Heart right ventricle (tissue), 16 donors: ENCODE measurements at regions of chr11 and their contacts with region 1.

Region 1: DNA sequence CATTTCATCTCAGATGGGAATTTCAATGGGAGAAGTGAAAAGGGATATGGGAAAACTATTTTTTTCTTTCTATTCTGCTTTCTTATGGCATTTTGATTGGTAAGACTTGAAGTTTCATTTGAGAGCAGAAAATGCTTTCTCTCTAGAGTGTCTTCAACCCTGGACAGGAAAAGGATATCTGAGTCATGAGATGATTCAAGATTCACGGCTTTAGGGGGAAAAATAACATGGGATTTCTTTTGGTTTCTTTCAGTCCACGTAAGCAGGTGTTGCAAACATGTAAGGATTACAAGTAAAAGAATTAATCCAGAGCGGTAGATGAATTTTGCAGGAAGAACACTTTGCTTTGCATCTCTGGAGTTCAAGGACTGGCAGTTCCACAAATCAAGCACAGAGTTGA is 1001.0 kb upstream of the TENM4 start:
- DNase-seq: no peak
- ATAC-seq: no peak
- H3K4me3 ChIP-seq: no peak overlapping the region
- H3K27ac ChIP-seq: no peak overlapping the region
- H3K4me1 ChIP-seq: no peaks in the 10 kb centered on the region
- H3K27me3 ChIP-seq: no peaks in the 10 kb centered on the region
- CTCF ChIP-seq: no peak

Region 2: DNA sequence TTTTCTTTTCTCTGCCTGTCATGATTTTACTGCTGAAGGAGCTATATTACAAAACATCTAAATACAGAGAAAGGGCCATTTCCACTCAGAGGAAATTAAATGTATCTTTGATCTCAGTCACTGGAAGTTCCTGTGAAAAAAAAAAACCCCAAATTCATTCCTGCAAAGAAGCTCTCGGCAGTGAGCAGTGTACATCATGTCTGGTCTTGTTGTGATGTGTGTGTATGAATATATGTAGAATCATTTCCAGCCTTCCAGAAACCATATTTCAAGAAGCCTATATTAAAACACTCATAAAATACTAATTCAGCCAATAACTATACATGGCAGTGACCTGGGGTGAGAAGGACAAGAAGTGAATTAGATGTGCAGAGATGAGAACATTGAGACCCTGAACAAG is 607.8 kb before region 1 on chr11:
- intact Hi-C with region 1: no loop called
- DNase-seq: no peak
- ATAC-seq: no peak
- H3K4me3 ChIP-seq: no peak overlapping the region
- H3K27ac ChIP-seq: no peak overlapping the region
- H3K4me1 ChIP-seq: no peaks in the 10 kb centered on the region
- H3K27me3 ChIP-seq: no peaks in the 10 kb centered on the region
- CTCF ChIP-seq: no peak

Region 3: GRCh38 chr11:80320765-80321164 is 121.1 kb before region 1 on chr11:
- intact Hi-C with region 1: no loop called
- DNase-seq: no peak
- ATAC-seq: no peak
- H3K4me3 ChIP-seq: no peak overlapping the region
- H3K27ac ChIP-seq: no peak overlapping the region
- H3K4me1 ChIP-seq: no peaks in the 10 kb centered on the region
- H3K27me3 ChIP-seq: no peaks in the 10 kb centered on the region
- CTCF ChIP-seq: no peak

Region 4: DNA sequence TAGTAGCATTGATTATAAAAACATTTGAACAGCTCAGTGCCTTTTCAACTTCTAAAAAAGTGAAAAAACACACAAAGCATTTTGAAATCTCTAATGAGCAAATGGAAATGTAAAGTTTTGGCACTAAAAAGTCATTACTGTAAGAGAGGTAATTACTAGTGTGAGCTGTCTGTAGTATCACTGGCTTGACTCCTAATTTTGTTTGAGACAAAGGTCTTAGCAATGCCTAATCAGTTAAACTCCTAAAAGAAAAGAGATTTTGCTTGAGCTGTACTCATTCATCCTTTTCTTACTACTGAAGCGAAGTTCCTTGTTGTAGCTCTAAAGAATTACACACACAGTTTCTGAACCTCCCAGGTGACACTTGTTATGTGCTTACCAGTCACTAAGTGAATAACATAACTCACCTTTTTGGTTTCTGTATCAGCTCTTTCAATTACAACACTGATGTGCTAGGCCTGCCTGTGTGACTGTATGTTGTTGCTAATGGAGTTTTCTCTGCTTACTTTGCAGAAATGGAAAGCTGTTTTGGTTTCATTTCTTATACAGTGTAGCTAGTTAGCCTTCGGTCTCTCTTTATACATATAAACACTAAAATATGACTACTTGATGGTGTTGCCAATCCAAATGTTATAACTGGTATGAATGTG is 76.6 kb before region 1 on chr11:
- intact Hi-C with region 1: no loop called
- DNase-seq: no peak
- ATAC-seq: no peak
- H3K4me3 ChIP-seq: no peak overlapping the region
- H3K27ac ChIP-seq: no peak overlapping the region
- H3K4me1 ChIP-seq: no peaks in the 10 kb centered on the region
- H3K27me3 ChIP-seq: no peaks in the 10 kb centered on the region
- CTCF ChIP-seq: no peak

Region 5: GRCh38 chr11:80424012-80424695 is 17.7 kb before region 1 on chr11:
- intact Hi-C with region 1: loop called in 1 of 10 experiments (anchors 2 kb)
- DNase-seq: no peak
- ATAC-seq: no peak
- H3K4me3 ChIP-seq: no peak overlapping the region
- H3K27ac ChIP-seq: no peak overlapping the region
- H3K4me1 ChIP-seq: no peaks in the 10 kb centered on the region
- H3K27me3 ChIP-seq: no peaks in the 10 kb centered on the region
- CTCF ChIP-seq: no peak

Region 6: GRCh38 chr11:80486678-80487077 is 44.9 kb after region 1 on chr11:
- intact Hi-C with region 1: no loop called
- DNase-seq: no peak
- ATAC-seq: no peak
- H3K4me3 ChIP-seq: no peak overlapping the region
- H3K27ac ChIP-seq: no peak overlapping the region
- H3K4me1 ChIP-seq: no peaks in the 10 kb centered on the region
- H3K27me3 ChIP-seq: no peaks in the 10 kb centered on the region
- CTCF ChIP-seq: no peak